Endothelial cell of umbilical vein (primary cell): ENCODE measurements at regions of chr16 and their contacts with region 1.

Region 1: GRCh38 chr16:75464130-75464918 is at the start of gene TMEM170A:
- DNase-seq: peak; percentile 100
- H3K4me3 ChIP-seq: peak within 1 kb of the TSS; percentile 65 to 93 (median 68)
- H3K27ac ChIP-seq: peak within 1 kb of the TSS; percentile 74
- H3K4me1 ChIP-seq: peaks cover 10% of the 10 kb centered on the region
- H3K27me3 ChIP-seq: no peaks in the 10 kb centered on the region
- CTCF ChIP-seq: peak; percentile 100
- POLR2A ChIP-seq: peak; percentile 98
- total RNA-seq, gene TMEM170A: 22.2 and 24.2 TPM in 2 replicates

Region 2: DNA sequence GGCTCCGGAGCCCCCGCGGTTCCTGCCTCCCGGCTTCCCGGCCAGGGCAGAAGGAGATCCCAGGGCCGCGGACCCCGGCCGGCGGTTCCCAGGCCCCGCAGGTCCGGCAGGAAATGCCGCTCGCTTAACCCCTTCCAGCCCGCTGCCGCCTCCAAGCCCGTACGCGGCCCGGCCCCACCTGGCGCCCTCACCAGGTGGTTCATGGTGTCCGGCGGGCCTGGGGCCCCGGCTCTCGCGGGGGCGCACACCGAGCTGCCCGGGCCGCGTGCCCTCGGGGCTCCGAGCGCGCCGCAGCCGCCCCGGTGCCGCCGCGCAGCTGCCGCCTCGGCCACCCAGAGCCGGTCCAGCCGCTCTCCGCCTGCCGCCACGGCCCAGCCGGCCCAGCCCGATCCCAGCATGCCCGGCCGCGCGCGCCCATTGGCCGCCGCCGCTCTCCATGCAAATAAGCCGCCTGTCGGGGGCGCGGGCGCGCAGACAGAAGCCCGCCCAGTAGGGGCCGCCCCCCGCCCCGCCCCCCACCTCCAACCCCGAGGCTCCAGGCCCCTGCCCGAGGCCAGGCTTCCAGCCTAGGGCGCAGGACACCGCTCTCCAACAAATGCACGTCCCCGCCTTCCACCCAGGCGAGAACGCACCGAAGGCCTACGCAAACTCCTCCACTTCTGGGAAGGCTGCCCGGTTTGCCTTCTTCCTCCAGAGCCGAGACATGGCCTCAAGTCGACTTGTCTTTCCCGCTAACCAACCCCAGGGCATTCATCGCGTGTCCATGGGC is 212.9 kb before region 1 on chr16 and contains the start of gene BCAR1:
- CTCF ChIA-PET with region 1: no interaction called
- POLR2A ChIA-PET with region 1: no interaction called
- dilution Hi-C with region 1: no loop called
- intact Hi-C with region 1: loop called (anchors 5 kb)
- DNase-seq: peak; percentile 89
- H3K4me3 ChIP-seq: peak within 1 kb of the TSS; percentile 50 to 83 (median 80)
- H3K27ac ChIP-seq: peak within 1 kb of the TSS; percentile 92
- H3K4me1 ChIP-seq: peaks cover 80% of the 10 kb centered on the region
- H3K27me3 ChIP-seq: no peaks in the 10 kb centered on the region
- CTCF ChIP-seq: no peak
- POLR2A ChIP-seq: peak; percentile 73
- total RNA-seq, gene BCAR1: 237 and 267 TPM in 2 replicates

Region 3: GRCh38 chr16:75415169-75415905 is 49.0 kb before region 1 on chr16:
- CTCF ChIA-PET with region 1: interaction called, 5 read pairs
- POLR2A ChIA-PET with region 1: no interaction called
- dilution Hi-C with region 1: no loop called
- intact Hi-C with region 1: loop called (anchors 2 kb)
- DNase-seq: no peak
- H3K4me3 ChIP-seq: no peak overlapping the region
- H3K27ac ChIP-seq: no peak overlapping the region
- H3K4me1 ChIP-seq: peaks cover 7% of the 10 kb centered on the region
- H3K27me3 ChIP-seq: no peaks in the 10 kb centered on the region
- CTCF ChIP-seq: no peak
- POLR2A ChIP-seq: no peak

Region 4: DNA sequence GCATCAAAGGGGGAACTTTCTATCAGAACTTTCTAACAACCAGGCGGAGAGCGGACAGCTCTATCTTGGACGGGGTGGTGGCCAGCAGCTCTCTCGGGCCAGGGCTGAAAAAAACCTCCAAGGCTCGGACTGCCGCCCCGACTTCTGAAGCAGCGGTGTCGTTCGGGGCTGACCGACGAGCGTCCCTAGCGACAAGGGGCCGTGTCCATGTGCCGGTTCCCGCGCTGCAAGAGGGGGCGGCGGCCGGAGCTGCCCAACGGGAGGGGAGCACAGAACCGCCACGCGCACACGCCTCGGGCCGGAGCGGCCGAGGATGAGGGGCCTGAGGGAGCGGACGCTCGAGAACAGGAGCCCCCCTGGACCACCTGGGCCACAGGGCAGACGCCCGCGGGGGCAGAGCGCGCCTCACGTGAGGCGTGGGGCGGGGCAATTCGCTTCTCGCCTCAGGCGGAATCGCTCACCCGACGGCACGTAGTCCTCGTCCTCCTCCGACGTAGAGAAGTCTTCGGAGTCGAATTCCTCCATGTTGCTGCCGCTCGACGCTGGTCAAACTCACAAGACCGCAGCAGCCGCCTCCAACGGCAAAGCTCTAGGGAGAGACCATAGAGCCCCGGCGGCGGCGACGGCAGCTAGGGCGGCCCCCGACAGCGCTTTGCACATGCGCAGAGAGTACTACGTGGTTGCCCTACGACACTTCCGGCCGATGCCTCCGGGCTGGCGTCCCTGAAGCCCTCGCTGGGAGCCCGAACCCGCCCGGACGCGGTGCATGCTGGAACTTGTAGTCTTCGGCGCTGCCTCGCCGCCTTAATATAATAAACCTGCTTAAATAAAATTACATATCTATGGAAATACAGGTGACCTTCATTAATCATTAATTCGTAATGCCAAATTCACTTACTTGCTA is 31.2 kb before region 1 on chr16 and contains the start of gene CFDP1:
- CTCF ChIA-PET with region 1: interaction called, 9 read pairs
- POLR2A ChIA-PET with region 1: interaction called, 4 read pairs
- dilution Hi-C with region 1: no loop called
- intact Hi-C with region 1: loop called (anchors 1 kb)
- DNase-seq: peak; percentile 94
- H3K4me3 ChIP-seq: peak within 1 kb of the TSS; percentile 37 to 81 (median 72)
- H3K27ac ChIP-seq: peak within 1 kb of the TSS; percentile 91
- H3K4me1 ChIP-seq: peaks cover 10% of the 10 kb centered on the region
- H3K27me3 ChIP-seq: no peaks in the 10 kb centered on the region
- CTCF ChIP-seq: no peak
- POLR2A ChIP-seq: peak; percentile 73
- total RNA-seq, gene CFDP1: 49.6 and 53.8 TPM in 2 replicates

Region 5: GRCh38 chr16:75555707-75556430 is 91.5 kb after region 1 on chr16 and contains the start of gene TMEM231:
- CTCF ChIA-PET with region 1: interaction called, 4 read pairs
- POLR2A ChIA-PET with region 1: no interaction called
- dilution Hi-C with region 1: no loop called
- intact Hi-C with region 1: loop called (anchors 2 kb)
- DNase-seq: peak; percentile 91
- H3K4me3 ChIP-seq: peak within 1 kb of the TSS; percentile 75 to 86 (median 80)
- H3K27ac ChIP-seq: peak within 1 kb of the TSS; percentile 46
- H3K4me1 ChIP-seq: peaks cover 12% of the 10 kb centered on the region
- H3K27me3 ChIP-seq: peaks cover 9 to 14% of the 10 kb centered on the region in 2 experiments
- CTCF ChIP-seq: no peak
- POLR2A ChIP-seq: no peak
- total RNA-seq, gene TMEM231: 9.4 and 10.0 TPM in 2 replicates

Region 6: GRCh38 chr16:75647492-75648264 is 183.4 kb after region 1 on chr16 and contains the starts of genes KARS1 and TERF2IP:
- CTCF ChIA-PET with region 1: interaction called, 3 read pairs
- POLR2A ChIA-PET with region 1: interaction called, 4 read pairs
- dilution Hi-C with region 1: no loop called
- intact Hi-C with region 1: loop called (anchors 5 kb)
- DNase-seq: peak; percentile 97
- H3K4me3 ChIP-seq: peak within 1 kb of the TSS; percentile 95 to 98 (median 98)
- H3K27ac ChIP-seq: peak within 1 kb of the TSS; percentile 67
- H3K4me1 ChIP-seq: peaks cover 32% of the 10 kb centered on the region
- H3K27me3 ChIP-seq: no peaks in the 10 kb centered on the region
- CTCF ChIP-seq: no peak
- POLR2A ChIP-seq: peak; percentile 92
- total RNA-seq, gene KARS1: 137 and 146 TPM in 2 replicates
- total RNA-seq, gene TERF2IP: 40.7 and 41.5 TPM in 2 replicates